CD4-positive, alpha-beta T cell (primary cell): ENCODE measurements at regions of chr3 and their contacts with region 1.

Region 1: GRCh38 chr3:110180733-110181132 is 843.4 kb upstream of the DPPA4 start:
- DNase-seq: no peak
- ATAC-seq: no peak
- H3K4me3 ChIP-seq: no peak overlapping the region
- H3K4me3 Mint-ChIP-seq: no peak overlapping the region
- H3K27ac ChIP-seq: no peak overlapping the region
- H3K27ac Mint-ChIP-seq: no peak overlapping the region
- H3K4me1 ChIP-seq: no peaks in the 10 kb centered on the region
- H3K4me1 Mint-ChIP-seq: no peaks in the 10 kb centered on the region
- H3K27me3 ChIP-seq: no peaks in the 10 kb centered on the region
- H3K27me3 Mint-ChIP-seq: no peaks in the 10 kb centered on the region
- CTCF ChIP-seq: no peak

Region 2: GRCh38 chr3:110193074-110193473 is 12.3 kb after region 1 on chr3:
- CTCF ChIA-PET with region 1: interaction called, 3 read pairs
- POLR2A ChIA-PET with region 1: no interaction called
- intact Hi-C with region 1: loop called in 1 of 2 experiments (anchors 1 kb)
- DNase-seq: no peak
- ATAC-seq: no peak
- H3K4me3 ChIP-seq: no peak overlapping the region
- H3K4me3 Mint-ChIP-seq: no peak overlapping the region
- H3K27ac ChIP-seq: no peak overlapping the region
- H3K27ac Mint-ChIP-seq: no peak overlapping the region
- H3K4me1 ChIP-seq: no peaks in the 10 kb centered on the region
- H3K4me1 Mint-ChIP-seq: no peaks in the 10 kb centered on the region
- H3K27me3 ChIP-seq: no peaks in the 10 kb centered on the region
- H3K27me3 Mint-ChIP-seq: peaks cover 4% of the 10 kb centered on the region
- CTCF ChIP-seq: no peak

Region 3: DNA sequence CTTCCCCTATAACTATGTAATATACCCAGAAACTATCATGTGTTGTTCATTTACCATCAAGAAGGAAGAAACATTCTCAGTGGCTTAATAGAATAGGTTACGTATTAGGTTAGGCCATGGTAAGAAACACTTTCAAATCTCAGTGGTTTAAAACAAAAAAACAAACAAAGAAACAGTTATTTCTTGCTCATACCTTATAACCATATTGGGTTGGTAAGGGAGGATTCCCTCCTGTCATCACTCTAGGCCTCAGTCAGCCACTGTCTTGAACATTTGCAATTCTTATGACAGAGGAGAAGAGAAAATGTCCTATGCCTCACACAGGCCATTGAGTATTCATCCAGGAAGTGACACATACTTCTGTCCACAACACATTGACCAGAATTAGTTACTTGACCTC is 163.2 kb after region 1 on chr3:
- CTCF ChIA-PET with region 1: no interaction called
- POLR2A ChIA-PET with region 1: no interaction called
- intact Hi-C with region 1: no loop called
- DNase-seq: no peak
- ATAC-seq: no peak
- H3K4me3 ChIP-seq: no peak overlapping the region
- H3K4me3 Mint-ChIP-seq: no peak overlapping the region
- H3K27ac ChIP-seq: no peak overlapping the region
- H3K27ac Mint-ChIP-seq: no peak overlapping the region
- H3K4me1 ChIP-seq: no peaks in the 10 kb centered on the region
- H3K4me1 Mint-ChIP-seq: no peaks in the 10 kb centered on the region
- H3K27me3 ChIP-seq: no peaks in the 10 kb centered on the region
- H3K27me3 Mint-ChIP-seq: no peaks in the 10 kb centered on the region
- CTCF ChIP-seq: no peak

Region 4: DNA sequence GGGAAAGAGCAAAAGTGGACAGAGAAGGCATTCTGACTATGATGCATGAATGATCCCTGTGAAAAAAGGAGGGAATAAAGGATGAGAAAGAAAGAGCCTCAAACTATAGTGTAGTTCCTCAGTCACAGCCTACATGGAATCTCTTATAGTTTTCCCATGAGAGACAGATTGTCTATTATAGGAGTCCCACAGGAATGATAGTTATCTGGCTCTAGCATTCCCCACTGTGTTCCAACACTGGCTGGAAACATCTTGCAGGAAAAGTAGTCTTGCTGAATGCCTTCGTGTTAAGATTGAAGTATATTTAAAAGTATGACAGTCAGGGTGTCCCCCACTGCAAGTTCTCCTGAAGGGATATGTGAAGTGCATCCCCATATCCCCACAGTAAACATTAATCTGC is 249.4 kb after region 1 on chr3:
- CTCF ChIA-PET with region 1: no interaction called
- POLR2A ChIA-PET with region 1: no interaction called
- intact Hi-C with region 1: no loop called
- DNase-seq: no peak
- ATAC-seq: no peak
- H3K4me3 ChIP-seq: no peak overlapping the region
- H3K4me3 Mint-ChIP-seq: no peak overlapping the region
- H3K27ac ChIP-seq: no peak overlapping the region
- H3K27ac Mint-ChIP-seq: no peak overlapping the region
- H3K4me1 ChIP-seq: no peaks in the 10 kb centered on the region
- H3K4me1 Mint-ChIP-seq: no peaks in the 10 kb centered on the region
- H3K27me3 ChIP-seq: no peaks in the 10 kb centered on the region
- H3K27me3 Mint-ChIP-seq: no peaks in the 10 kb centered on the region
- CTCF ChIP-seq: no peak

Region 5: GRCh38 chr3:110650741-110651140 is 470.0 kb after region 1 on chr3:
- CTCF ChIA-PET with region 1: no interaction called
- POLR2A ChIA-PET with region 1: no interaction called
- intact Hi-C with region 1: no loop called
- DNase-seq: no peak
- ATAC-seq: no peak
- H3K4me3 ChIP-seq: no peak overlapping the region
- H3K4me3 Mint-ChIP-seq: no peak overlapping the region
- H3K27ac ChIP-seq: no peak overlapping the region
- H3K27ac Mint-ChIP-seq: no peak overlapping the region
- H3K4me1 ChIP-seq: no peaks in the 10 kb centered on the region
- H3K4me1 Mint-ChIP-seq: no peaks in the 10 kb centered on the region
- H3K27me3 ChIP-seq: no peaks in the 10 kb centered on the region
- H3K27me3 Mint-ChIP-seq: no peaks in the 10 kb centered on the region
- CTCF ChIP-seq: no peak